Esophagus muscularis mucosa (tissue), 4 donors: ENCODE measurements at regions of chr11 and their contacts with region 1.

Region 1: DNA sequence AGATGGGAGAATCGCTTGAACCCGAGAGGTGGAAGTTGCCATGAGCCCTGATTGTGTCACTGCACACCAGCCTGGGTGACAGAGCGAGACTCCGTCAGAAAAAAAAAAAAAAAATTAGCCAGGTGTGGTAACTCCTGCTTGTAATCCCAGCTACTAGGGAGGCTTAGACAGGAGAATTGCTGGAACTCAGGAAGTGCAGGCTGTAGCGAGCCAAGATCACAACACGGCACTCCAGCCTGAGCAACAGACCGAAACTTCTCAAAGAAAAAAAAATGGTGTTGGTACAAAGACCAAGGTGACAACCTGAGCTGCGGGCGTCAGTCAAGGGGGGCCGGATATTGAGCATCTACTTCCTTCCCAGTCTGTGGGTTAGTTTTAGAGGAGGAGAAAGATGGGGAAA is 48.4 kb upstream of the HSPA8 start:
- DNase-seq: no peak
- H3K4me3 ChIP-seq: no peak overlapping the region
- H3K27ac ChIP-seq: peak overlapping the region in 3 of 4 donors; percentile 64 to 68 (median 65)
- H3K4me1 ChIP-seq: peaks cover 0 to 75% (median 68%) of the 10 kb centered on the region in 4 donors
- H3K27me3 ChIP-seq: no peaks in the 10 kb centered on the region
- CTCF ChIP-seq: no peak
- EP300 ChIP-seq: no peak
- POLR2A ChIP-seq: no peak

Region 2: GRCh38 chr11:122814401-122814800 is 296.0 kb before region 1 on chr11:
- intact Hi-C with region 1: no loop called
- DNase-seq: no peak
- H3K4me3 ChIP-seq: no peak overlapping the region
- H3K27ac ChIP-seq: no peak overlapping the region
- H3K4me1 ChIP-seq: peaks cover 0 to 9% (median 4%) of the 10 kb centered on the region in 4 donors
- H3K27me3 ChIP-seq: no peaks in the 10 kb centered on the region
- CTCF ChIP-seq: no peak
- EP300 ChIP-seq: no peak
- POLR2A ChIP-seq: no peak

Region 3: DNA sequence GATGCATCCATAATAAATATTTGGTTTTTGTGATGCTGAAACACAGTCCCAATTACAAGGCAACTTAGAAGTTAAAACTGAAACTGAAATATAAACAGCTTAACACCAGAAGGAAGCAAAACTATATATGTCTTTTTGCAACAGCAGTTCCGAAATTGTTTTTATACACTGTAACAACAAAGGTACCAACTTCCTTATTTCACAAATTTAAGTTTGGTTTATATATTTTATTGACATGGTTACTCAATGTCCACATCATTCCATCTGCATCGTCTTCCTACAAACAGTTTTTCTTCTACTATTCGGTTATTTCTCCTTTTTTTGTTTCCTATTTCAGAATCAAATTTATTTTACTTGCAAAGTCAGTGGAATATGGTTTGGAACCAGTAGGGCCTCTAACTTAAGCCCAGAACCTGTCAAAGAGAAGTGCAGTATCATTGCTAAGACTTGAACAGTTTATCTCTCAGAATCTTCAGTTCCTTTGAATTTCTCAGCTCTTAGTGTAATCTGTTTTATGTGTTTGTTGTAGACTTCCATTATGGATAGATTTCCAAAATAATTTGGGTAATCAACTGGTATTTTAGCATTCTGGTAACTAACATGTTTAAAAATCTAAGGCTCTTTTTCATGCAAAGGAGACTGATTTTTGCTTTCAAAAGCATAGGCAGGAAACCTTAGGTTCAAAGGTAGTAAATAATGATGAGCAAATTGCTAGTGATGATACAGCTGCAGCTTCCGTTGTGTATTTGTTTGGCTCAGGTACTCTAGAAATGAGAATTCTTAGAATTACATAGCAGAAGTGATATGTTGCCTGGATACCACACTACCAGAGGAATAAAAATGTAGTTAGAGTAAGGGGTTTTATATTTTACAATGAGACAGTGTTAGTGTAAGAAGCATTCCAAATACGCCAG is 40.2 kb before region 1 on chr11:
- intact Hi-C with region 1: loop called (anchors 5 kb)
- DNase-seq: no peak
- H3K4me3 ChIP-seq: peak overlapping the region; percentile 5 to 30 (median 15)
- H3K27ac ChIP-seq: peak overlapping the region; percentile 30 to 68 (median 55)
- H3K4me1 ChIP-seq: peaks cover 4 to 59% (median 40%) of the 10 kb centered on the region in 4 donors
- H3K27me3 ChIP-seq: no peaks in the 10 kb centered on the region
- CTCF ChIP-seq: no peak
- EP300 ChIP-seq: no peak
- POLR2A ChIP-seq: no peak

Region 4: DNA sequence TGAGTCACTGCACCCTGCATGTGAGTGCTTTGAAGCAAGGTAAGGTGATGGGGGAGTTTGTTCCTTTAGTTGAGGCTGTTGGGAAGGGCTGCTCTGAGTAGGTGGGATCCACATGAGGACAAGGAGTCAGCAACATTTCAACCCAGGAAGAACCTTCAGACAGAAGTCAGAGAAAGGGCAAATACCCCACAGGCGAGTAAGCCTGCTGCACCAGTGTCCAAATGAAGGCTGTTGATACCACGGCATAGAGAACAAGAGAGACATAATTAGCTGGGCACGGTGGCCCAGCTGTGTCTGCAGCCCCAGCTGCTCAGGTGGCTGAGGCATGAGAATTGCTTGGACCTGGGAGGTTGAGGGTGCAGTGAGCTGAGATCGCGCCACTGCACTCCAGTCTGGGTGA is 139.0 kb after region 1 on chr11:
- intact Hi-C with region 1: loop called (anchors 2 kb)
- DNase-seq: no peak
- H3K4me3 ChIP-seq: no peak overlapping the region
- H3K27ac ChIP-seq: no peak overlapping the region
- H3K4me1 ChIP-seq: peaks cover 4 to 44% (median 33%) of the 10 kb centered on the region in 4 donors
- H3K27me3 ChIP-seq: no peaks in the 10 kb centered on the region
- CTCF ChIP-seq: no peak
- EP300 ChIP-seq: no peak
- POLR2A ChIP-seq: no peak